T-cell (primary cell): ENCODE measurements at regions of chr14 and their contacts with region 1.

Region 1: GRCh38 chr14:31678421-31679249 is 117.4 kb downstream of the NUBPL start:
- DNase-seq: no peak
- ATAC-seq: no peak
- H3K4me3 ChIP-seq: no peak overlapping the region
- H3K4me3 Mint-ChIP-seq: no peak overlapping the region
- H3K27ac ChIP-seq: no peak overlapping the region
- H3K27ac Mint-ChIP-seq: no peak overlapping the region
- H3K4me1 ChIP-seq: no peaks in the 10 kb centered on the region
- H3K4me1 Mint-ChIP-seq: no peaks in the 10 kb centered on the region
- H3K27me3 ChIP-seq: no peaks in the 10 kb centered on the region
- H3K27me3 Mint-ChIP-seq: no peaks in the 10 kb centered on the region

Region 2: DNA sequence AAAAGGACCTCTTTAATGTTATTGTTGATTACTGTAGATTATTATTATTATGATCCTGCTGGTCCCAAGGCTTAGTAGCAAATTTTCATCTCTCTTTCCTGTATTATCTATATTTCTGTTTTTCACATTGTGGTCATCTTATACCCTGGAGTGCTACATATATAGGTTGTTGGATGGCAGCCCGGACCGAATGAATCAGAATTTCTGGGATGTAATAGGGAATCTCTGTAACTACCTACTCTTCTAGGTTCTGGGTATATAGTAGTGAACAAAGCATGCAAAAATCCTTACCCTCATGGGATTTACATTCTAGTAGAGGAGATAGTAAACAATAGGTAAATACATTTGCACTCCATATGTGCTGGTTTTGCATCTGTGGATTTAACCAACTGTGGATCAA is 86.0 kb before region 1 on chr14:
- CTCF ChIA-PET with region 1: no interaction called
- POLR2A ChIA-PET with region 1: interaction called in 1 of 2 experiments, 10 read pairs
- DNase-seq: no peak
- ATAC-seq: no peak
- H3K4me3 ChIP-seq: no peak overlapping the region
- H3K4me3 Mint-ChIP-seq: no peak overlapping the region
- H3K27ac ChIP-seq: no peak overlapping the region
- H3K27ac Mint-ChIP-seq: no peak overlapping the region
- H3K4me1 ChIP-seq: no peaks in the 10 kb centered on the region
- H3K4me1 Mint-ChIP-seq: peaks cover 0 to 3% (median 0%) of the 10 kb centered on the region in 3 donors
- H3K27me3 ChIP-seq: no peaks in the 10 kb centered on the region
- H3K27me3 Mint-ChIP-seq: no peaks in the 10 kb centered on the region

Region 3: DNA sequence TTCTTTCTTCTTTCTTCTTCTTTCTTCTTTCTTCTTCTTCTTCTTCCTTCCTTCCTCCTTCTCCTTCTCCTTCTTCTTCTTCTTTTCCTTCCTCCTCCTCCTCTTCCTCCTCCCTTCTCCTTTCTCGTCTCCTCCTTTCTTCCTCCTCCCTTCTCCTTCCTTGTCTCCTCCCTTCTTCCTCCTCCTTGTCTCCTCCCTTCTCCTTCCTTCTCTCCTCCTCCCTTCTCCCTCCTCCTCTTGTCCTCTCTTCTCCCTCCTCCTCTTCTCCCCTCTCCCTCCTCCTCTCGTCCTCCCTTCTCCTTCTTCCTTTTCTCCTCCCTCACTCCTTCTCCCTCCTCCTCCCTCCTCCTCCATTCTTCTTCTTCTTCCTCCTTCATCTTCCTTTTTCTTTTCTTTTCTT is 72.9 kb before region 1 on chr14:
- CTCF ChIA-PET with region 1: no interaction called
- POLR2A ChIA-PET with region 1: interaction called in 1 of 2 experiments, 10 read pairs
- DNase-seq: no peak
- ATAC-seq: no peak
- H3K4me3 ChIP-seq: no peak overlapping the region
- H3K4me3 Mint-ChIP-seq: no peak overlapping the region
- H3K27ac ChIP-seq: no peak overlapping the region
- H3K27ac Mint-ChIP-seq: no peak overlapping the region
- H3K4me1 ChIP-seq: no peaks in the 10 kb centered on the region
- H3K4me1 Mint-ChIP-seq: no peaks in the 10 kb centered on the region
- H3K27me3 ChIP-seq: no peaks in the 10 kb centered on the region
- H3K27me3 Mint-ChIP-seq: no peaks in the 10 kb centered on the region